ENCODE measurements at regions of chr10 and their contacts with region 1.

Region 1: GRCh38 chr10:17742918-17743317 is 9.1 kb upstream of the TMEM236 start:
- DNase-seq: peak; percentile 45 to 50
- H3K4me3 ChIP-seq: peak overlapping the region; percentile 29; the same call in 1 of the 2 replicates
- H3K27ac ChIP-seq: no peak overlapping the region
- H3K4me1 ChIP-seq: no peaks in the 10 kb centered on the region
- H3K27me3 ChIP-seq: no peaks in the 10 kb centered on the region
- CTCF ChIP-seq: peak; percentile 83

Region 2: GRCh38 chr10:16799621-16800020 is 943.3 kb before region 1 on chr10:
- CTCF ChIA-PET with region 1: no interaction called
- POLR2A ChIA-PET with region 1: no interaction called
- intact Hi-C with region 1: no loop called
- DNase-seq: no peak
- H3K4me3 ChIP-seq: no peak overlapping the region
- H3K27ac ChIP-seq: no peak overlapping the region
- H3K4me1 ChIP-seq: no peaks in the 10 kb centered on the region
- H3K27me3 ChIP-seq: no peaks in the 10 kb centered on the region
- CTCF ChIP-seq: no peak

Region 3: DNA sequence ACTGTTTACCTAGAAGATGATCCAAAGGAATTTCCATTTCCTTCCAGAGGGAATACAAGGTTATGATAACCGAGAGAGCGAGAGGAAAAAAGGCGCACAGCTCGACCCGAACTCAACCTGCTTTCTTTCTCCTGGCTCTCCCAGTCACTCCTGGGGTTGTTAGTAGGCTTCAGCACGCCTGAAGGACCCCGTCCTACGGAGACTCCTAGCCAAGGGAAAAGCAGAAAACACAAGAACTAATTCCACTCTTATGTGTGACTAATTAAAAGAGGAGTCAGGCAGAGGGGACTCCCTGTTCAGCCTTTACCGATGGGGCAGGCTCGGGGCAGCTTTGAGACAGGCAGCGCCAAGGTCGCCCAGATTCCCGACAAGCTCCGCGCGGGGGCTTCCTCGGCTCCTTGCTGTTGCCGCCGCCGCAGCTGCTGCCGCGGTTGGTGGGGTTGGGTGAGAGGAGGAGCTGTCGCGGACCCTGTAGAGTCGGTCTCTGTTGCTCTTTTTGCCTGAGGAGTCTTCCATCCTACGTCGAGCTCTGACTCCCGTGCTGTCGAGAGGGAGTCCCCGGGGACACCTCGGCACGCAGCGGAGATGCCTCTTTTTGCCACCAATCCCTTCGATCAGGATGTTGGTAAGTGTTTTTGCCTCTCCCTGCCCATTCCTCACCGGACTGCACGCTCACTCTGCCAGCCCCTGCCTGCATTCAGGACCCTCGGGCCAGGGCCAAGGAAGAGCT is 99.0 kb before region 1 on chr10 and contains the start of gene STAM:
- CTCF ChIA-PET with region 1: no interaction called
- POLR2A ChIA-PET with region 1: no interaction called
- intact Hi-C with region 1: no loop called
- DNase-seq: peak; percentile 76 to 90
- H3K4me3 ChIP-seq: peak within 1 kb of the TSS; percentile 96
- H3K27ac ChIP-seq: peak within 1 kb of the TSS; percentile 91
- H3K4me1 ChIP-seq: peaks cover 30% of the 10 kb centered on the region
- H3K27me3 ChIP-seq: no peaks in the 10 kb centered on the region
- CTCF ChIP-seq: no peak
- total RNA-seq, gene STAM: 37.0 and 38.8 TPM in 2 replicates

Region 4: DNA sequence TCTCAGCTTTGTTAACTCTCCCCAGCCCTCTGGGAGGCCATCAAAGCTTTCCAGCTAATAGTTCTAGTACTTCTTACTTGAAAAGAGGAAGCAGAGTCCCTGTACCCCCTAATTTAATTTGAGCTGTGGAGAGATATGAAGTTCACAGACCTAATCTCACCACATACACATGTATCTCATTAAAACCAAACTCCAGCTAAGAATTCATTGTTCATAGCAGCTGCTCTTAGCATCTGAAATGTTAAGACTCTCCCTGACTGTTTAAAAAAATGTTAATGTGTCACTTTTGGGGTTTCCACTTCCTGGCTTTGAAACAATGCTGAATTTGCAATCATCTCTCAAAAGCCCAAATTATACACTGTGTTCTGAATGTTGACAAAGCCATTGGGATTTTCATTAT is 50.1 kb after region 1 on chr10:
- CTCF ChIA-PET with region 1: no interaction called
- POLR2A ChIA-PET with region 1: no interaction called
- intact Hi-C with region 1: no loop called
- DNase-seq: no peak
- H3K4me3 ChIP-seq: no peak overlapping the region
- H3K27ac ChIP-seq: no peak overlapping the region
- H3K4me1 ChIP-seq: no peaks in the 10 kb centered on the region
- H3K27me3 ChIP-seq: no peaks in the 10 kb centered on the region
- CTCF ChIP-seq: no peak

Region 5: DNA sequence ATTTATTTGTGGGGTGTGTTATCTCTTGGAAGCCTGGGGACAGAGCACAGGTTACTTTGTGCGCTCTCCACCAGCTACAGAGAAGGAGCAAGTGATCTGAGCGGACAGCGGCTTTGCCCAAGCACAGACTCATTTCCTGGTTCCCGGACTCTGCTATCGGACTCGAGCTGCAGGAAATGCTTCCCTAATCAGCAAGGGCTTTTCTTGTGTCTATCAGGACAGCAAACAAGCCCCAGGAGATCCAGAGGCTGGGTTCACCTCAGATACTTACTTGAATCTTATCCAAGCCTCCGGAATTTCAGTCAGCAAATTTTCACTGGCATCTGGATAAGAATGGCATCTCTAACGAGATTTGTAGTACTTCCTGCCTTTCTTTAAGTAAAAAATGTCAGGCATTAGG is 94.0 kb after region 1 on chr10:
- CTCF ChIA-PET with region 1: no interaction called
- POLR2A ChIA-PET with region 1: no interaction called
- intact Hi-C with region 1: loop called (anchors 5 kb)
- DNase-seq: peak in 1 of 2 experiments; percentile 60
- H3K4me3 ChIP-seq: no peak overlapping the region
- H3K27ac ChIP-seq: no peak overlapping the region
- H3K4me1 ChIP-seq: peaks cover 9% of the 10 kb centered on the region
- H3K27me3 ChIP-seq: no peaks in the 10 kb centered on the region
- CTCF ChIP-seq: no peak

Region 6: GRCh38 chr10:18340496-18341051 is 597.7 kb after region 1 on chr10:
- CTCF ChIA-PET with region 1: no interaction called
- POLR2A ChIA-PET with region 1: no interaction called
- intact Hi-C with region 1: no loop called
- DNase-seq: no peak
- H3K4me3 ChIP-seq: no peak overlapping the region
- H3K27ac ChIP-seq: no peak overlapping the region
- H3K4me1 ChIP-seq: no peaks in the 10 kb centered on the region
- H3K27me3 ChIP-seq: peaks cover 6% of the 10 kb centered on the region; the same call in 1 of the 2 replicates
- CTCF ChIP-seq: no peak